ENCODE measurements at regions of chr22 and their contacts with region 1.

Region 1: GRCh38 chr22:30754971-30755756 is 60.5 kb downstream of the OSBP2 start:
- DNase-seq: peak; percentile 54 to 78 (median 62)
- ATAC-seq: peak; percentile 95
- H3K4me3 ChIP-seq: no peak overlapping the region
- H3K27ac ChIP-seq: no peak overlapping the region
- H3K4me1 ChIP-seq: no peaks in the 10 kb centered on the region; a peak in 1 of 5 replicates
- H3K27me3 ChIP-seq: no peaks in the 10 kb centered on the region; a peak in 1 of 5 replicates
- CTCF ChIP-seq: peak; percentile 66 to 81 (median 76)
- EP300 ChIP-seq: no peak
- POLR2A ChIP-seq: no peak
- RAD21 ChIP-seq: peak; percentile 82 to 92

Region 2: DNA sequence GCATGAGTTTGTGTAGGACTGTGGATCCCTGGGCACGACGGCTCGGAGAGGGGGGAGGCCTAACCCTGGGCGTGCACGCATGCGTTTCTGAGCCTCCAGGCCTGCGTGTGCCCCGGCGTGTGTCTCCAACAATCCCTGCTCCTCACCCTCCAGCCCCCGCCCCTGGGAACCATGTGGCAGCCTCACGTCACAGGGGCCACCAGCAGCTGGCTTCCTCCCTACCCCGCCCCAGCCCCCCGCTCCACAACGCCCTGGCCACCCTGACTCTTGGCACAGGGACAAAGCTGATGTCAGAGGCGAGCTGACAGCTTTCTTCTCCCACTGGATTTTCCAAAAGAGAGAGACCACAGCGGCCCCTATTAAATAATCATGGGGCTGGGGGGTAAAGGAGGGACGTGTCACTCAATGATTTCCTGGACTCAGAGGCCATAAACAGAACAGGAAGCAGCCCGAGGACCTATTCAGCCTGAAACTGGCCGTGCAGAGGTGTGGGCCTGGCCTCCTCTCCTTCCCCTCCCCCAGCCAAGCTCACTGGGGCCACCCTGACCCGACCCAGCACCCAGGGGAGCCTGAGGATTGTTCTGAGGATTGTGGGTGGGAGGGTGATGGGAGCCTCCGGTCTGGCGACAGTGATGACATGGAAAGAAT is 501.8 kb before region 1 on chr22:
- CTCF ChIA-PET with region 1: interaction called, 10 read pairs
- POLR2A ChIA-PET with region 1: no interaction called
- in situ Hi-C with region 1: no loop called
- intact Hi-C with region 1: no loop called
- DNase-seq: no peak
- ATAC-seq: no peak
- H3K4me3 ChIP-seq: no peak overlapping the region
- H3K27ac ChIP-seq: no peak overlapping the region
- H3K4me1 ChIP-seq: peaks cover 0 to 44% of the 10 kb centered on the region in 2 experiments; a peak in 2 of 5 replicates
- H3K27me3 ChIP-seq: peaks cover 0 to 3% of the 10 kb centered on the region in 2 experiments; a peak in 1 of 5 replicates
- CTCF ChIP-seq: no peak
- EP300 ChIP-seq: no peak
- POLR2A ChIP-seq: no peak
- RAD21 ChIP-seq: no peak

Region 3: DNA sequence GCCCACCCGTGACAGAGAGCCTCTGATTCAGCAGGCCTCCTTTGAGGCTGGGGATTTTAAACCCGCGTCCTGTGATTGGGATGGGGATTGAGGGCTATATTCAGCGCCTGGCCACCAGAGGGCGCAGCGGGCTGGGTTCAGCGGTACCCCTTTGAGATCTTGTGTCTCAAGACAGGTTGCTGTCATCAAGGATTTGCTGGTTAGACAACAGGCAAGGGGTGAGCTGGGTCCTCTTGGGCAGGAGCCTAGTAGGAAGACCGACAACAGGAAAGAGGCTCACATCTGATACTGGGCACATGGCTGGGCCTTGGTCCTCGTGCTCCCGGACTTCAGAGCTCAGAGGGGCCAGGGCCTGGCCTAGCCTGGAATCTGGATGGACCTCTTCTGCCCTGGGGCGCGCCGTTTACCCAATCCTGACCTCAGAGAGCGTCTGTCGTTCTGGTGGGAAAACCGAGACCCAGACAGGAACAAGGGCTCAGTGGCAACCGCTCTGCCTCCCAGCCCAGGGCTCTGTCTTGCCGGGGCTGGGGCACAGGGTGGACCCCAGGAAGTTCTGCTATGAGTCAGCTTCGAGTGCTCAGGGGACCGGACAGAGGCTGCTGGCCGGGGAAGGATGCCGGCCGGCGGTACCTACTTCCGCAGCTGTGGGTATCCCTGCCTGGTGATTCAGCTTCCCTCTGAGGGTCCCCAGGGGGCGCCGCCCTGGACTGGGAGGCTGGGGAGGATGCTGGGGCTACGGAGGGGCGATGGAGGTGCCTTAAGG is 120.5 kb before region 1 on chr22:
- CTCF ChIA-PET with region 1: interaction called, 34 read pairs
- POLR2A ChIA-PET with region 1: interaction called, 13 read pairs
- in situ Hi-C with region 1: loop called (anchors 5 kb)
- intact Hi-C with region 1: loop called (anchors 1 kb)
- DNase-seq: peak; percentile 68 to 83 (median 77)
- ATAC-seq: peak; percentile 84
- H3K4me3 ChIP-seq: no peak overlapping the region
- H3K27ac ChIP-seq: no peak overlapping the region
- H3K4me1 ChIP-seq: peaks cover 5 to 28% of the 10 kb centered on the region in 2 experiments; a peak in 4 of 5 replicates
- H3K27me3 ChIP-seq: no peaks in the 10 kb centered on the region
- CTCF ChIP-seq: peak; percentile 84 to 93 (median 90)
- EP300 ChIP-seq: no peak
- POLR2A ChIP-seq: no peak
- RAD21 ChIP-seq: peak; percentile 78 to 89

Region 4: GRCh38 chr22:30667494-30668385 is 87.4 kb before region 1 on chr22 and contains the start of gene DUSP18:
- CTCF ChIA-PET with region 1: no interaction called
- POLR2A ChIA-PET with region 1: no interaction called
- in situ Hi-C with region 1: no loop called
- intact Hi-C with region 1: loop called (anchors 10 kb)
- DNase-seq: peak; percentile 92 to 96 (median 96)
- ATAC-seq: peak; percentile 98
- H3K4me3 ChIP-seq: peak within 1 kb of the TSS; percentile 48
- H3K27ac ChIP-seq: peak within 1 kb of the TSS; percentile 70
- H3K4me1 ChIP-seq: peaks cover 7 to 16% of the 10 kb centered on the region in 2 experiments; a peak in 3 of 5 replicates
- H3K27me3 ChIP-seq: no peaks in the 10 kb centered on the region
- CTCF ChIP-seq: peak; percentile 37 to 59 (median 42); a peak in 4 of 6 replicates
- EP300 ChIP-seq: no peak
- POLR2A ChIP-seq: peak; percentile 79
- RAD21 ChIP-seq: no peak
- polyA plus RNA-seq, gene DUSP18: 1.1 to 1.3 TPM